Posterior cingulate gyrus (tissue), 11 donors: ENCODE measurements at regions of chr15 and their contacts with region 1.

Region 1: GRCh38 chr15:42495361-42496212 is at the start of gene SNAP23:
- DNase-seq: peak; percentile 85 to 99 (median 92)

Region 2: DNA sequence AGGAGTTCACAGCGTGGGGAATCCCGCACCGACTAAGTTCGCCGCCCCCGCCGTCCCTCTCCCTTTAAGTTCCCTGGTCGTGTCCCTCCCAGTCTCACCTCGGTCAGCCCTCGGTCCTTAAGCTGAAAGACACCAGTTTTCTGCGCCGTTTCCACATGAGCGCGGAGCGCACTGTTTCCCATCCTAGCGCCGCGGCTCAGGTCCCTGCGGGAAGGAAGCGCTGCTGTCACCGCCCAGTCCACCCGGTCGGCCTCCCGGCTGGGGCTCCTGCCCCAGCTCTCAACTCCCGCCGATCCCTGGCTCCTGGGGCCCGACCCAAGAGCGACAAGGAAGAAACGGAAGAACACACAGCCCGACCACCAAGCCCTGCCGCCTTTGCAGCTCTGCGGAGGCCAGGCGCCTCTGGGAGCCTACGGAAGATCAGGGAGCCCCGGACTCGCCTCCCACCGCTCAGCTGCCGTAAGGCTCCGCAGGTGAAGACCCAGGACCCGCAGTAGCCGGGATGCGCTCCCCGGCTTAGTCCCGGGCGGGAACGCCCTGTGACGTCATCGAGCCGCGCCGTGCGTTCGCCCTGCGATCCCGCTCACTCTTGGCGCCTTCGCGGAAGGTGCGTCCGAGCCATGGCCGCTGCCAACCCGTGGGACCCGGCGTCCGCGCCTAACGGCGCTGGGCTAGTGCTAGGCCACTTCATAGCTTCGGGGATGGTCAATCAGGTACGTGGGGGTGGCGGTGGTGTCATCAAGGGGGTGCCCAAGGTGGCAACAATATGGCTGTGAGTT is 52.9 kb after region 1 on chr15 and contains the starts of genes HAUS2 and LRRC57:
- intact Hi-C with region 1: loop called (anchors 5 kb)
- DNase-seq: peak; percentile 78 to 98 (median 84)

Region 3: DNA sequence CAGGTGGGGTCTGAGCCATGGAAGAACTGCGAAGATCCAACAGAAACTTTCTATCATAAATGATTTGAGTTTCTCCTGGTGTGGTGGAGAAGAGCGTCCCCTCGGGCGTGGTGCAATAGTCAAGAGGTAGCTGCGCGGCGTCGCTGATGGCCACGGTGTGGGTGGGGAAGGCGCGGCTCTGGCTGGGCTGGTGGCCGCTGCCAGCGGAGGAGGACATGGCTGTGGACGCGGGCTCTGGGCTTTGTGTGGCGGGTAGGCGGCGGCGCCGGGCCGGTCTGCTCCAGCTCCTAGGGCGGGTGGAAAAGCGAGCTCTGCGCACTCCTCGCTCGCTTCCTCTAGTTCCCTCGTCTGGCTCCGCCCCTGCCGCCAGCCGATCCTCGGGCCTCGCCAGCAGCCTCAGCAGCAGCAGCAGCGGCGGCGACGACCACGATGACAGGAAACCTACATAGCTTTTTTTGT is 85.7 kb after region 1 on chr15:
- intact Hi-C with region 1: loop called (anchors 10 kb)
- DNase-seq: peak; percentile 78 to 98 (median 88)

Region 4: GRCh38 chr15:42650208-42651066 is 154.8 kb after region 1 on chr15:
- intact Hi-C with region 1: loop called (anchors 5 kb)
- DNase-seq: peak in 7 of 10 donors; percentile 22 to 87 (median 65)

Region 5: GRCh38 chr15:42920519-42921227 is 425.1 kb after region 1 on chr15 and contains the start of gene TTBK2:
- intact Hi-C with region 1: loop called (anchors 10 kb)
- DNase-seq: peak; percentile 97 to 100 (median 99)